ENCODE measurements at regions of chr9 and their contacts with region 1.

Region 1: GRCh38 chr9:4077499-4078102 is 222.3 kb downstream of the GLIS3 start:
- DNase-seq: peak; percentile 92 to 93
- ATAC-seq: peak; percentile 91
- H3K4me3 ChIP-seq: no peak overlapping the region
- H3K27ac ChIP-seq: peak overlapping the region in 1 of 2 donors; percentile 50
- H3K4me1 ChIP-seq: peaks cover 0 to 3% of the 10 kb centered on the region in 2 donors
- H3K27me3 ChIP-seq: no peaks in the 10 kb centered on the region

Region 2: GRCh38 chr9:4117835-4118610 is 40.4 kb after region 1 on chr9:
- intact Hi-C with region 1: loop called in 1 of 2 experiments (anchors 5 kb)
- DNase-seq: peak; percentile 52 to 78
- ATAC-seq: no peak
- H3K4me3 ChIP-seq: no peak overlapping the region
- H3K27ac ChIP-seq: peak overlapping the region in 1 of 2 donors; percentile 49
- H3K4me1 ChIP-seq: peaks cover 9 to 23% of the 10 kb centered on the region in 2 donors
- H3K27me3 ChIP-seq: no peaks in the 10 kb centered on the region

Region 3: GRCh38 chr9:4235871-4236804 is 158.5 kb after region 1 on chr9:
- intact Hi-C with region 1: loop called in 1 of 2 experiments (anchors 10 kb)
- DNase-seq: no peak
- ATAC-seq: no peak
- H3K4me3 ChIP-seq: no peak overlapping the region
- H3K27ac ChIP-seq: no peak overlapping the region
- H3K4me1 ChIP-seq: peaks cover 0 to 8% of the 10 kb centered on the region in 2 donors
- H3K27me3 ChIP-seq: no peaks in the 10 kb centered on the region

Region 4: GRCh38 chr9:4339357-4339756 is 261.8 kb after region 1 on chr9:
- intact Hi-C with region 1: no loop called
- DNase-seq: peak; percentile 84 to 94
- ATAC-seq: peak; percentile 59
- H3K4me3 ChIP-seq: no peak overlapping the region
- H3K27ac ChIP-seq: no peak overlapping the region
- H3K4me1 ChIP-seq: no peaks in the 10 kb centered on the region
- H3K27me3 ChIP-seq: no peaks in the 10 kb centered on the region

Region 5: DNA sequence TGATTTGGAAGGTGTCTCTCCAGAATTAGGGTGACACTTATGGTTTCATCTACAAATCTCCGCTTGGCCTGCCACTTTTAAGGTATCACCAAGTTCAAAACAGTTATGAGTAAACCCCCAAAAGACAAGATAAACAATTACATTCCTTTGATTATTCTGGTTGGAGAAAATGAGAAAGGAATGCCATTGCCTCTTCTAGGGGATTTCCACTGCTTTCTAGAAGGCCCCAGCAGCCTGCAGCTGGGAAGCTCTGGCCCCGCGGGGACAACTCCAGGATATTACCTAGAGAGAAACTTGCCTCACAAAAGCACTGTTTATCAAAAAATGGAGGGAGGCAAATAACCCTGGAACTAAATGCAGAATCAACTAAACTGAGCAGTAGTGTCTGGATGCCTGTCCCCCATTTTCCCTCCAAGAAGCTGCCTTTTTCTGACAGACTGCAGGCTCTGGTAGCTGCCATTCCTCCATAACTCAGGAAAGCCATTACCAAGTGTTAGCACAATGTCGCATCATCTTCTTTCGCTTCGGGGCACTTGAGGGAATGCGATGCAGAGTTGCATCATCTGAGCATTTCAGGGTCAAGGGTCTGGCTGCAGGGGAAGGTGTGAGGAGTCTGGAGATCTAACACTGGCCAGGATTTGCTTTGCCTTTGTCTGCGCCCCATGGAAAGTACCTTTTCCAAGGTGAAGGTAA is 513.0 kb after region 1 on chr9:
- intact Hi-C with region 1: no loop called
- DNase-seq: no peak
- ATAC-seq: no peak
- H3K4me3 ChIP-seq: no peak overlapping the region
- H3K27ac ChIP-seq: no peak overlapping the region
- H3K4me1 ChIP-seq: peaks cover 0 to 2% of the 10 kb centered on the region in 2 donors
- H3K27me3 ChIP-seq: no peaks in the 10 kb centered on the region

Measured in aorta (tissue), 5 donors.